Activated T-helper 1 cell treated with anti-CD3 and anti-CD28 coated beads, Interleukin-12 subunit alpha, Interleukin-12 subunit beta, Interleukin-2, Interleukin-4 antibody, amounts not matched to agents 30 ng/mL and 10 ng/mL and 1 ng/mL, durations not matched to agents 14 hours and 24 hours and 36 hours (primary cell): ENCODE measurements at regions of chr2 and their contacts with region 1.

Region 1: GRCh38 chr2:30273261-30273861 is 42.0 kb downstream of the LBH start:
- DNase-seq: no peak
- H3K4me3 Mint-ChIP-seq: peak overlapping the region; percentile 56
- H3K27ac Mint-ChIP-seq: peak overlapping the region; percentile 97
- H3K4me1 Mint-ChIP-seq: peaks cover 71% of the 10 kb centered on the region
- H3K27me3 Mint-ChIP-seq: peaks cover 4% of the 10 kb centered on the region

Region 2: GRCh38 chr2:29663268-29663667 is 610.1 kb before region 1 on chr2:
- intact Hi-C with region 1: no loop called
- DNase-seq: no peak
- H3K4me3 Mint-ChIP-seq: no peak overlapping the region
- H3K27ac Mint-ChIP-seq: no peak overlapping the region
- H3K4me1 Mint-ChIP-seq: no peaks in the 10 kb centered on the region
- H3K27me3 Mint-ChIP-seq: peaks cover 2% of the 10 kb centered on the region

Region 3: DNA sequence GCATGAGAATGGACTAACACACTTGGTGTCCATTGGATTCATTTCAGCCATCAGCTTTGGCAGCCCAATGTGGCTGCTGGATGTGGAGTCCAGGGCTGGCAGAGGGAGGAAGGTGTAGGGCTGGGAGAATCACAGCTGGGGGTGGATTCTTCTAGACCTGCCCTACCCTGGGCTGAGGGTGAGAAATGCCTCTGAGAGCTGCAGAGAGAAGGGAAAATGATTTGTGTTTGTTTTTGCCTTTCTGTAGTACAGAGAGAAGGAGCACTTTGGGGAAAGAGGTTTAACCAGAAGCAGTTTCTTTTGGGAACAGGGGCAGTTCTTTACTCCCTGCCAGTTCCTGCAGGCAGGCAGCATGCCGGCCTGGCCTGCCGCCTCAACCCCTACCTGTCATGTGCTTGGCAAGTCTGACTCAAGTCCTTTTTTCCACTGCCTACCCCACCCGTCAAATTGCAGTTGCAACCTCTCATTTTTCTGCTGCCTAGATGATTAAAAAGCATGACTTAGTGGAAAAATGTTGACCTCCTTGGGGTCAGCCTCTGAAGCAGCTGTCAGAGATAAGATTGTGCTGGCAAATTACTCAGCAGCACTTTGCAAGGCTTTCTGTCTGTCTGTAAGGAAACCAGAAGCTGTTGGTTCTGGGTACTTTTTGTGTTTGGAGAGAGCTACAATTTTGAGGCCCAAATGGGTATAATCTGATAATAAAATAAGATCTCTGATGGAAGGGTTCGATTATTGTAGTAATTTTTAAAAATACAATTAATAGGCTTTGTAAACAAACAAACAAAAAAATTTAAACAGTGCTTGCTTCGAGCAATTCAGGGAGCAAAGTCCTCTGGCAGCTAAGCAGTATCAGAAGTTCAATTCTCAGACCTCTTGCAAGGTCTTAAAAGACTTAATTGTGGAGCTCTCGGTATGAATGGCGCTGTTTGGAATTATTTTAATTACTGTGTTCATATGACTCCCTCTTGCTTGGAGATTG is 20.3 kb before region 1 on chr2:
- intact Hi-C with region 1: loop called (anchors 1 kb)
- DNase-seq: peak; percentile 48
- H3K4me3 Mint-ChIP-seq: peak overlapping the region; percentile 53
- H3K27ac Mint-ChIP-seq: peak overlapping the region; percentile 93
- H3K4me1 Mint-ChIP-seq: peaks cover 92% of the 10 kb centered on the region
- H3K27me3 Mint-ChIP-seq: no peaks in the 10 kb centered on the region

Region 4: GRCh38 chr2:30287857-30288513 is 14.6 kb after region 1 on chr2:
- intact Hi-C with region 1: loop called (anchors 1 kb)
- DNase-seq: no peak
- H3K4me3 Mint-ChIP-seq: peak overlapping the region; percentile 57
- H3K27ac Mint-ChIP-seq: peak overlapping the region; percentile 83
- H3K4me1 Mint-ChIP-seq: peaks cover 31% of the 10 kb centered on the region
- H3K27me3 Mint-ChIP-seq: peaks cover 2% of the 10 kb centered on the region

Region 5: GRCh38 chr2:30315391-30316063 is 42.2 kb after region 1 on chr2:
- intact Hi-C with region 1: loop called (anchors 2 kb)
- DNase-seq: peak; percentile 11
- H3K4me3 Mint-ChIP-seq: peak overlapping the region; percentile 58
- H3K27ac Mint-ChIP-seq: peak overlapping the region; percentile 94
- H3K4me1 Mint-ChIP-seq: peaks cover 44% of the 10 kb centered on the region
- H3K27me3 Mint-ChIP-seq: no peaks in the 10 kb centered on the region